Heart left ventricle (tissue), 16 donors: ENCODE measurements at regions of chr19 and their contacts with region 1.

Region 1: GRCh38 chr19:17075035-17075863 is at the starts of genes HAUS8 and MYO9B:
- DNase-seq: peak; percentile 99 to 100 (median 100)
- ATAC-seq: peak; percentile 94 to 98 (median 97)
- H3K4me3 ChIP-seq: peak within 1 kb of the TSS; percentile 47 to 92 (median 74)
- H3K27ac ChIP-seq: peak within 1 kb of the TSS in 11 of 12 donors; percentile 64 to 91 (median 82)
- H3K4me1 ChIP-seq: peaks cover 0 to 64% (median 41%) of the 10 kb centered on the region in 12 donors
- H3K27me3 ChIP-seq: no peaks in the 10 kb centered on the region
- CTCF ChIP-seq: no peak
- POLR2A ChIP-seq: peak in 1 of 2 donors; percentile 48
- total RNA-seq, gene HAUS8: 2.1 to 9.2 (median 4.7) TPM
- total RNA-seq, gene MYO9B: 24.2 to 89.4 (median 31.3) TPM

Region 2: DNA sequence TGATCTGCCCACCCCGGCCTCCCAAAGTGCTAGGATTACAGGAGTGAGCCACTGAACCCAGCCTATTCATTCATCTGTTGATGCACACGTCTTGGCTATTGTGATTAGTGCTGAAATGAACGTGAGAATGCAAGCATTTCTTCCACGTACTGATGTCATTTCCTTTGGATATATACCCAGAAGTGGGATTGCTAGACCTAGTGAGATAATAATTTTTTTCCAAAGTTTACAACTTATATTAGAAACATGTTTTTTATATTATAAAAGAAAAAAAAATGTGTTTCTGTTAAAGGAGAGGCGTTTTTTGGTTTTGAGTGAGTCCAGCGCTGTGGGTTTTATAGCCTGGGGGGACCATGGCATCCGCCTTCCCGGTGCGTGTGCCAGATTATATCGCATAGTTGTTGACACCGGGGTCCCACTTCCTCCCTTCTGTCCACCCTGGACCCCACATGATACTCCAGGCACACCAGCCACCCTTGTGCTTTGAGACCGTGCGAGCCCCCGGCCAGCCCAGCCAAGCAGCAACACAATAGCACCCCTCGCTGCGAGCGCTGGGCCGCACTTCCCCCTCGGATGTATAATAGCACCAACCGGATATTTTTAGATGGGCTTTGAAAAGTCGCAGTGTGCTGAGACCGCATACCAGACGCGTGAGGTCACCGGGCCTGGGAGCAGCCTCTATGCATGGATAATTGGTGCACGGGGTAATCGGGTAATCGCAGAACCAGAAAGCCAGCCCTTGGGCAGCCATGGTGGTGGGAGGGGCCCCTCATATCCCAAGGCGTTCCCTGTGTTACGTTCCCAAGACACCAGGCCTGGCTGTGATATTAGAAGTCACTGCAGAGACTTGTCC is 60.0 kb after region 1 on chr19:
- intact Hi-C with region 1: loop called in 9 of 10 experiments (anchors 1 to 5 kb)
- DNase-seq: peak; percentile 94 to 98 (median 96)
- ATAC-seq: peak; percentile 90 to 95 (median 92)
- H3K4me3 ChIP-seq: peak overlapping the region in 9 of 12 donors; percentile 19 to 53 (median 34)
- H3K27ac ChIP-seq: peak overlapping the region; percentile 82 to 98 (median 92)
- H3K4me1 ChIP-seq: peaks cover 9 to 56% (median 42%) of the 10 kb centered on the region in 12 donors
- H3K27me3 ChIP-seq: no peaks in the 10 kb centered on the region
- CTCF ChIP-seq: peak in 10 of 12 donors; percentile 18 to 71 (median 45)
- POLR2A ChIP-seq: peak in 1 of 2 donors; percentile 36

Region 3: GRCh38 chr19:17215125-17215971 is 140.1 kb after region 1 on chr19 and contains the start of gene USE1:
- intact Hi-C with region 1: loop called in 2 of 10 experiments (anchors 5 to 10 kb)
- DNase-seq: peak; percentile 91 to 95 (median 93)
- ATAC-seq: peak; percentile 95 to 97 (median 95)
- H3K4me3 ChIP-seq: peak within 1 kb of the TSS; percentile 38 to 83 (median 78)
- H3K27ac ChIP-seq: peak within 1 kb of the TSS; percentile 90 to 97 (median 94)
- H3K4me1 ChIP-seq: peaks cover 0 to 26% (median 11%) of the 10 kb centered on the region in 12 donors
- H3K27me3 ChIP-seq: no peaks in the 10 kb centered on the region
- CTCF ChIP-seq: no peak
- POLR2A ChIP-seq: peak in 1 of 2 donors; percentile 55
- total RNA-seq, gene USE1: 22.5 to 34.4 (median 25.8) TPM

Region 4: GRCh38 chr19:17226002-17226933 is 151.0 kb after region 1 on chr19 and contains the start of gene OCEL1:
- intact Hi-C with region 1: loop called in 3 of 10 experiments (anchors 5 to 10 kb)
- DNase-seq: peak; percentile 98 to 99 (median 99)
- ATAC-seq: peak; percentile 96 to 98 (median 98)
- H3K4me3 ChIP-seq: peak within 1 kb of the TSS; percentile 26 to 74 (median 67)
- H3K27ac ChIP-seq: peak within 1 kb of the TSS; percentile 77 to 93 (median 88)
- H3K4me1 ChIP-seq: peaks cover 0 to 16% (median 10%) of the 10 kb centered on the region in 12 donors
- H3K27me3 ChIP-seq: no peaks in the 10 kb centered on the region
- CTCF ChIP-seq: peak in 1 of 12 donors; percentile 8
- POLR2A ChIP-seq: peak in 1 of 2 donors; percentile 91
- total RNA-seq, gene OCEL1: 8.7 to 27.2 (median 16.8) TPM

Region 5: GRCh38 chr19:17235618-17236377 is 160.5 kb after region 1 on chr19:
- intact Hi-C with region 1: loop called in 2 of 10 experiments (anchors 5 to 10 kb)
- DNase-seq: peak; percentile 69 to 91 (median 76)
- ATAC-seq: peak; percentile 71 to 89 (median 88)
- H3K4me3 ChIP-seq: peak overlapping the region; percentile 11 to 82 (median 66)
- H3K27ac ChIP-seq: peak overlapping the region in 11 of 12 donors; percentile 53 to 86 (median 75)
- H3K4me1 ChIP-seq: peaks cover 4 to 29% (median 19%) of the 10 kb centered on the region in 12 donors
- H3K27me3 ChIP-seq: no peaks in the 10 kb centered on the region
- CTCF ChIP-seq: peak; percentile 31 to 80 (median 58)
- POLR2A ChIP-seq: peak in 1 of 2 donors; percentile 21

Region 6: GRCh38 chr19:17266975-17267788 is 191.9 kb after region 1 on chr19 and contains the start of gene BABAM1:
- intact Hi-C with region 1: loop called in 1 of 10 experiments (anchors 10 kb)
- DNase-seq: peak; percentile 94 to 98 (median 97)
- ATAC-seq: peak; percentile 96 to 98 (median 97)
- H3K4me3 ChIP-seq: peak within 1 kb of the TSS; percentile 58 to 96 (median 80)
- H3K27ac ChIP-seq: peak within 1 kb of the TSS in 11 of 12 donors; percentile 62 to 96 (median 76)
- H3K4me1 ChIP-seq: peaks cover 0 to 23% (median 15%) of the 10 kb centered on the region in 12 donors
- H3K27me3 ChIP-seq: no peaks in the 10 kb centered on the region
- CTCF ChIP-seq: no peak
- POLR2A ChIP-seq: peak in 1 of 2 donors; percentile 46
- total RNA-seq, gene BABAM1: 60.9 to 92.4 (median 75.9) TPM